Posterior vena cava (tissue), 2 donors: ENCODE measurements at regions of chr9 and their contacts with region 1.

Region 1: GRCh38 chr9:18250053-18250452 is 223.9 kb upstream of the ADAMTSL1 start:
- DNase-seq: no peak

Region 2: GRCh38 chr9:18359335-18359734 is 109.3 kb after region 1 on chr9:
- intact Hi-C with region 1: no loop called
- DNase-seq: no peak

Region 3: GRCh38 chr9:19018201-19018600 is 768.1 kb after region 1 on chr9:
- intact Hi-C with region 1: loop called in 1 of 2 experiments (anchors 5 kb)
- DNase-seq: no peak